ENCODE measurements at regions of chr1 and their contacts with region 1.

Region 1: DNA sequence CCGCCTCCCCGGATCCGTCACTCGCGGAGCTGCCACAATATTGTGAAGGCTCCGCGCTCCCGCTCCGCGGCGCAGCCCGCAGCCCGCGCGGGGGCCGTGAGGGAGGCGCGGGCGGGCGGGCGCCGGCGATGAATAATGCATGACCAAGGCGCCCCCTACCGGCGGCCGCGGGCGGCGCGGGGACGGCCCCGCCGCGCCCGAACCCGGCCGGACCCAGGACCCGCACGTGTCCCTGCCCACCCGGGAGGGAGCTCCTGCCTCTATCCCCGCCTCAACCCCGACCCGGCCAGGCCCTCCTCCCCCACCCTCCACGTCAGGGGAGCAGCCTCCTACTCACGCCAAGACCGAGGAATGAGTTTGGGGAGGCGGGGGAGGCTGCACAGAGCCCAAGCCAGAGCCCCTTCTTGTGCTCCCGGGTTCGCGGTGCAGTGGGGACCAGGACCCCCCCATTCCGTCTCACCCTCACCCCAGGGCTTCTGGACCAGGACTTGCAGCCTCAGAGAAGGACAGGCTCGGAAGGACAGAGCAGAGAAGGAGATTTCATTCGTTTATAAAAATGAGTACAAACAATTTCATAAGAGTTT is 70.8 kb upstream of the CASZ1 start:
- DNase-seq: no peak
- H3K4me3 ChIP-seq: peak overlapping the region; percentile 57
- H3K27ac ChIP-seq: no peak overlapping the region
- H3K27me3 ChIP-seq: peaks cover 39% of the 10 kb centered on the region
- CTCF ChIP-seq: peak; percentile 21

Region 2: GRCh38 chr1:9671377-9672140 is 1195.7 kb before region 1 on chr1:
- CTCF ChIA-PET with region 1: no interaction called
- POLR2A ChIA-PET with region 1: no interaction called
- DNase-seq: peak; percentile 68
- H3K4me3 ChIP-seq: no peak overlapping the region
- H3K27ac ChIP-seq: peak overlapping the region; percentile 80
- H3K27me3 ChIP-seq: no peaks in the 10 kb centered on the region
- CTCF ChIP-seq: no peak

Region 3: GRCh38 chr1:10530281-10530740 is 336.9 kb before region 1 on chr1:
- CTCF ChIA-PET with region 1: interaction called, 12 read pairs
- POLR2A ChIA-PET with region 1: no interaction called
- DNase-seq: no peak
- H3K4me3 ChIP-seq: peak overlapping the region; percentile 52
- H3K27ac ChIP-seq: peak overlapping the region; percentile 81
- H3K27me3 ChIP-seq: no peaks in the 10 kb centered on the region
- CTCF ChIP-seq: peak; percentile 98

Region 4: DNA sequence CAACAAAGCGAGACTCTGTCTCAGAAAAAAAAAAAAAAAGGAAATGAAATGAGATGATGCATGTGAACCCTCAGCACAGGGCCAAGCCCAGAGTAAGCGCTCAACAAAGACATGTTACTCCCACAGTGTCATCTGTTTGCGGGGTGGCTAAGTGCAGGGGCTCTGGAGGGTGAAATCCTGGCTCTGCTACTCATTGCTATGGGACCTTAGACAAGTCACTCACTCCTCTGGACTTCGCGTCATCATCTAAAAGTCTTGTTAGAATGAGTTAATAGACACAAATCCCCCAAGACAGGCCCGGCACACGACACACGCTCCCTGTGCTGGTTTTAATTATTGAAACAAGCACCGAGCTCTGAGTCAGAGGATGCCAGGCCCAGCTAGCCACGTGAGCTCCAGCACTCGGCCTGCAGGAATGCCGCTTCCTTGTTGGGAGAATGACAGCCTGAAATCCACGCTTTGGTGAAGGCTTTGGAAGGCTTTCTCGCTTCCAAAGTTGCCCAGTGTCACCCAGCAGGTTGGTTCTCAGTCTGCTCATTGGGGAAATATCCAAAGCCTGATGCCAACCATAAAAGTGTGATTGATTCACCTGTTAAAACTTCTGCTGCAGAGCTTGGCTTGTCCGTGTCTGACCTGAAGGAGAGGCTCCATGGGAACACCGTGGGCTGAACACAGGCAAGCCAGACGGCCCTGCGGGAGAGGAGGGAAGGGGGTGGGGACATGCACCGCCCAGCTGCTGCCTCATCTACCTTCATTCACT is 108.5 kb after region 1 on chr1:
- CTCF ChIA-PET with region 1: no interaction called
- POLR2A ChIA-PET with region 1: no interaction called
- DNase-seq: peak; percentile 79
- H3K4me3 ChIP-seq: no peak overlapping the region
- H3K27ac ChIP-seq: peak overlapping the region; percentile 82
- H3K27me3 ChIP-seq: peaks cover 4% of the 10 kb centered on the region
- CTCF ChIP-seq: no peak